ENCODE measurements at regions of chr1 and their contacts with region 1.

Region 1: GRCh38 chr1:110495926-110496600 is 22.9 kb downstream of the KCNA10 start:
- DNase-seq: peak; percentile 78
- H3K27ac ChIP-seq: no peak overlapping the region
- CTCF ChIP-seq: peak; percentile 93

Region 2: DNA sequence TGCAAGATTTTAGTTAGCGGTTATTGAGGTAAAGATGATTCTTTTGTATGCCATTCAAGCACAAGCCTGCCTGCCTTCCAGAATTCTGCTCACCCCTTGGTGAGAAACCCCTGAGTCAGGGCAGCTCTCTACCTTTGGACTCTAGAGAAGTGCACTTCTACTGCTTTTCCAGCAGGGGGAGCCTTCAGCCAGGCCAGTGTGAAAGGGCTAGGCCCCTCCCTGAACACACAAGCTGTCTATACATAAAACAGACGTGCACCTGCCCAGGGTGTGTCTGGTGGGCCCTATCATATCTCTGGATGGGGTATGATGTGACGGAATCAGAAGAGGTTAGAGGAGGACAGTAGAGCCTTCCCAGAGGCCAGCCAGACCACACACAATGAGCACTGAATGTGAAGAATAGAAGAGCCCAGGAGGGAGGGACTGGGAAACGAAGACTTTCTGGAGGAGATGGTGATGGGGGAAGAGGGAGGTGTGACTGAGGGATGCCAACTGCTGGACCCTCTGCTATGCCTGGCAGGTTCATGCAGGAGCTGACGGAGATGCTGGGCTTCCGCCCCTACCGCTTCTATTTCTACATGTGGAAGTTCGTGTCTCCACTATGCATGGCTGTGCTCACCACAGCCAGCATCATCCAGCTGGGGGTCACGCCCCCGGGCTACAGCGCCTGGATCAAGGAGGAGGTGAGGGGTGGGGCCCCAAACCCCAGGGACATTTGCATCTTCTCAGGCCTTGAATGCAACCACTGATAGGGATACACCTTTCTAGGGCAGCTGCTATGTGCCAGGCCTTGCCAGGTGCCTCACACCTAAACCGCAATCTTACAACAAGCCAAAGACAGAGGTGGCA is 298.9 kb before region 1 on chr1:
- CTCF ChIA-PET with region 1: interaction called, 40 read pairs
- POLR2A ChIA-PET with region 1: no interaction called
- DNase-seq: peak; percentile 80
- H3K27ac ChIP-seq: no peak overlapping the region
- CTCF ChIP-seq: peak; percentile 92

Region 3: GRCh38 chr1:110209715-110210603 is 286.1 kb before region 1 on chr1 and contains the start of gene KCNC4:
- CTCF ChIA-PET with region 1: interaction called, 40 read pairs
- POLR2A ChIA-PET with region 1: no interaction called
- DNase-seq: peak; percentile 77
- H3K27ac ChIP-seq: peak within 1 kb of the TSS; percentile 69
- CTCF ChIP-seq: no peak

Region 4: GRCh38 chr1:110356405-110356804 is 139.7 kb before region 1 on chr1:
- CTCF ChIA-PET with region 1: no interaction called
- POLR2A ChIA-PET with region 1: no interaction called
- DNase-seq: peak; percentile 70
- H3K27ac ChIP-seq: no peak overlapping the region
- CTCF ChIP-seq: no peak

Region 5: GRCh38 chr1:110407260-110408210 is 88.5 kb before region 1 on chr1 and contains the start of gene LAMTOR5:
- CTCF ChIA-PET with region 1: interaction called, 45 read pairs
- POLR2A ChIA-PET with region 1: no interaction called
- DNase-seq: peak; percentile 64
- H3K27ac ChIP-seq: peak within 1 kb of the TSS; percentile 82
- CTCF ChIP-seq: no peak

Region 6: DNA sequence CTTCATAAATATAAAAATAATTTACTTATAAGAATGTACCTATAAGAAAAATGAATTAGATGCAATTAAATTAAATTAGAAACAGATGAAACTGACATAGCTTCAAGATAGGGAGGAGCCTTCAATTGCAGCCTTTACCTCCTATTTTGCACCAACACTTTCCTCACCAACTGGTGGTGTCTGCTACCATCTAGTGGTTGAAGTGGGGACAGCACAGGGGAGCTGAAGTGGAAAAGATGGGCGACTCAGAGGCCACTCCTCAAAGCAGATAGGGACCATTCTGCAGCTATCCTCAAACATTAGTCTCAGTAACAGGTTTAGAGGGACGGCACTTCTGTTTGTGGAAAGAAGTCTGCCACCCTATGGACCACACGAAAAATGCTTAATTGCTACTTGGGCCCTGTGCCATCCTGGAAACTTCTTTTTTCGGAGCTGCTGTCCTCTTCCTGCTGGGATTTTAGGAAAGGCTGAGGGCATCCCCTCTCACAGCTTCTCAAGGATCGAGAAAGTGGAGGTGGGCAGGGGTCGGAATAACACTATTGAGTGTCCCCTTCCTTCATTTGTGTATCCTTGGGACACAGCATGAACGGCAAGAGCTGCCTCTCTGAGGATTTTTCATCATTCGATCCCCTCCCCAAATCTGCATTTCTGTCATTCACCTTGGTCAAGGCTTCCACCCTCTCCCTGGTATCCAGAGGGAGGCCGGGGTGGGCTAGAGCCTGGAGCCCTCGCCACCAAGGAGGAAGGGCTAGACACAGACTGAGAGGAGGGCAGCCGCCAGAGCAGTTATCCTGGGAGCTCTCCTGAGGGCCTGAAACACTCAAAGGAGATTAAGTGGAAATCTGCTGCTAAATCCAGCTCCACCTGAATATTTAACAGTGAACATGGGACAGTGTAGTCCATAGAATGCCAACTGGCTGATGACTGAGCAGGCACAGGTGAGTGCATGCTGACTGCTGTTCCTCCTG is 35.5 kb before region 1 on chr1:
- CTCF ChIA-PET with region 1: interaction called, 48 read pairs
- POLR2A ChIA-PET with region 1: no interaction called
- DNase-seq: peak; percentile 80
- H3K27ac ChIP-seq: no peak overlapping the region
- CTCF ChIP-seq: peak; percentile 92

Region 7: DNA sequence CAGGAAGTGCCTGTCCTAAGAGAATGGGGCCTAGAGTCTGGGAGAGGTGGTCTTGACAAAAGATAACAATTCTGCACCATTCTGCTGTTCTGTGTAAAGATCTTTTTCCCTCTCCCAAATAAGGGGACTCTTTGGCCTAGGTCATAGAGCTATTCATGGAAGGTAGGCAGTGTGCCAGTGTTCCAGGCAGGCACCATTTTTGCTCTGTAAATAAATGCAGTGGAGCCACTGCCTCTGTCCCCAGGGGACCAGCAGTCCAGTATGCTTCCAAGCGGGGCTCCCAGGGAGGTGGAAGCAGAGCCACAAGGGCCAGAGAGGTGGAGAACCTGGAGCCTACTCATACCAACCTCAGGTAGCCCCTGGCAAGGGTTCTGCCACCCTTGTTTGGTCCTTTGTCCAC is 84.2 kb after region 1 on chr1:
- CTCF ChIA-PET with region 1: no interaction called
- POLR2A ChIA-PET with region 1: no interaction called
- DNase-seq: no peak
- H3K27ac ChIP-seq: no peak overlapping the region
- CTCF ChIP-seq: no peak

Region 8: GRCh38 chr1:110612065-110612751 is 116.1 kb after region 1 on chr1:
- CTCF ChIA-PET with region 1: no interaction called
- POLR2A ChIA-PET with region 1: no interaction called
- DNase-seq: no peak
- H3K27ac ChIP-seq: no peak overlapping the region
- CTCF ChIP-seq: no peak

Region 9: DNA sequence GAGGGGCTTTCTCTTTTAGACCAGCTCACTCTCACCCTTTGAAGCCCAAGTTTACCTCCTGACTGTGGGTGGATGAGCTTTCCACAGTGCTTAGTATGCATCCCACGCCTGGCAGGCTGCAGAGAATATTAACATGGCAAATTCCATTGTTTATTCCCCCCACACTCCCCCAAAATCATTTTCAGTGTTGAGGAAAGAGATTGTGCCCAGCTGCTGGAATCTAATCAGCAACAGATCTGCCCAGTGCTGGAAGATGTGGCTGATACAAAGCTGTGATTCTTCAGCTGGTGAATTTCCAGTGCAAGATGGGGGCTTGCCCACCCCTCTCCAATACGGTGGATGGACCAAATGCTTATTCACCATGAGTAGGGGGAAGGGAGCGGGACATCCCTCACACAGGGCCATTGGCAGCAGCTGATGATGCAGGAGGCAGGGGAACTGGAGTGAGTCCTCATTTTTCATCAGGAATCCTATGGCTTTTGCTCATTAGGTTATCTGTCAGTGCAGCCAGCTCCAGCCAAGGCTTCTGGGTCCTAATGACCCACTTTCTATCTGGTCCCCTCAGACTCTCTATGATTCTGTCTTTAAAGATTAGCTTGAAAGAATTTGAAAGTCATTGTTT is 218.4 kb after region 1 on chr1:
- CTCF ChIA-PET with region 1: no interaction called
- POLR2A ChIA-PET with region 1: no interaction called
- DNase-seq: no peak
- H3K27ac ChIP-seq: no peak overlapping the region
- CTCF ChIP-seq: no peak

Measured in RWPE1 (cell line).